ENCODE measurements at regions of chr2 and their contacts with region 1.

Region 1: DNA sequence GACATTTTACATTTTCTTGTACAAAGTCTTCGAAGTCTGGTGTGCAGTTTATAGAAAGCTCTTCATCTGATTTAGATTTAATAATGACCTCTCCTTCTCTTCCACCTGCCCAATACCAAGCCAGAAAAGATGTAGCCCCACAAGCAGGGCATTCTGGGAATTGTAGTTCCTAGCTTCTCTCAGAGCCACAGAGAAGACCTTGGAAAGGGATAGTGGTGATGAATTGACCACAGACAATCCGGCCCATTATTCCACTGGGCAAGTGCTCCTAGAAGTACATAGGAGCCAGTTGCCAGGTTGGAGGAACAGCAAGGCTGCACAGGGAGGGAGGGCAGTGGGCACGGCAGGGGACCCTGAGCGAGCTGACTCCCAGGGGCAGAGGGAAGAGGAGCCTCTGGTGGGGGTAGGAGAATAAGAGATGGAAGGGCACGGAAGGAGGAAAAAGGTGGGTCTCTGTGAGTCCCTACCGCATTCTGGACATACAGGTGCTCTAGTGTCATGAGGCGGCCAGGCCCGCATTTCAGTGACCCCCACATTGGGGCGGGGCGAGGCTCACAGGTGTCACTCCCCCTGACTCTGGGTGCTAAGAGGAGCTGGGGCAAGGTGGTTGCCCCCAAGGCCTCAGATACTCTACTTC is 152.5 kb upstream of the HAAO start:
- DNase-seq: no peak
- ATAC-seq: no peak

Region 2: GRCh38 chr2:43542285-43542937 is 597.5 kb after region 1 on chr2:
- intact Hi-C with region 1: loop called (anchors 5 kb)
- DNase-seq: no peak
- ATAC-seq: no peak